MCF 10A (cell line): ENCODE measurements at regions of chr12 and their contacts with region 1.

Region 1: GRCh38 chr12:29769162-29769858 is 14.4 kb downstream of the TMTC1 start:
- DNase-seq: peak; percentile 91
- H3K4me3 Mint-ChIP-seq: no peak overlapping the region
- H3K27ac Mint-ChIP-seq: peak overlapping the region; percentile 63
- H3K4me1 Mint-ChIP-seq: peaks cover 45% of the 10 kb centered on the region
- H3K27me3 Mint-ChIP-seq: no peaks in the 10 kb centered on the region
- CTCF ChIP-seq: no peak

Region 2: GRCh38 chr12:29562167-29562776 is 207.0 kb before region 1 on chr12:
- CTCF ChIA-PET with region 1: no interaction called
- POLR2A ChIA-PET with region 1: no interaction called
- intact Hi-C with region 1: no loop called
- DNase-seq: peak; percentile 58
- H3K4me3 Mint-ChIP-seq: no peak overlapping the region
- H3K27ac Mint-ChIP-seq: no peak overlapping the region
- H3K4me1 Mint-ChIP-seq: peaks cover 7% of the 10 kb centered on the region
- H3K27me3 Mint-ChIP-seq: no peaks in the 10 kb centered on the region
- CTCF ChIP-seq: no peak

Region 3: DNA sequence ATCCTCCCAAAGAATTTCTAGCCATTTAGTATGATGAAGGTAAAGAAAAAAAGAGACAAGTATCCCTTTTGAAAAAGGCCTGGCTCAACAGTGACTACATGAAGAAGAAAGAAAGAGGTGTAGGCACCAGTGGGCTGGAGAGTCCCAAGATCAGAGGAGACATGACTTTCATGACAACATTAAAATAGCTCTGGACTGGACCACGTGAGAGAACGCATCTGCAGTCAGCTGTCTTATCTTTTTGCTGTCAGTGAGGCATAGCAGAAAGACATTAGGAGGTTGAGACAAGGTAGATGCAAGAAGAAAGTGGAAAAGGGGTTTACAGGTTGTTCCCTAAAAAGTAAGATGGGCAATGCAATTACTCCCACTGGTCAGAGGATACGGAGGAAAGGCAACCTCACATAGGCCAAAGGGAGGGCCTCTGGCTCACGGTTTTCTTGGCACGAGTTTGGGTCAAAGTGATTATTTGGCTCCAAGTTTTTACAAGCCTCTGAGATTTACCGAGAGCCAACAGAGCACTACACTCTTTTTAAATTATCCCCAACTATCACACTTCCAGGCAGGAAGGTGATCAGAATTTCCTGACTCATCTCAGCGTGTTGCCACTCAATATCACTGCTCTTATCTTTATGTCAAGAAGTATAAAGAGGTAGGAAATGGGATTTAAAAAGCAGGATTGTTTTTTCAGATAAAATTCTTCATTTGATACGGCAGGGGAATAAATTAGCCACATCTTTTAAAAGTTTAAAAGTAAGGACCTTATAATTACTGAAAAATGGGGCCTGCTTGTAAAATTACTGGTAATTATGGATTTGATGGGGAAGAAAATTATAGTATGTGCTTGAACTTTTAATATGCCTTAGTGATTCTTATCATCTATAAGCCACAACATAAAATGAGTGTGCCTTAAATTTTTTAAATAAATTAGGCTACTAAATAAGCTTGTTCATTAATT is 14.8 kb before region 1 on chr12:
- CTCF ChIA-PET with region 1: interaction called, 3 read pairs
- POLR2A ChIA-PET with region 1: interaction called, 10 read pairs
- intact Hi-C with region 1: no loop called
- DNase-seq: no peak
- H3K4me3 Mint-ChIP-seq: no peak overlapping the region
- H3K27ac Mint-ChIP-seq: peak overlapping the region; percentile 92
- H3K4me1 Mint-ChIP-seq: peaks cover 38% of the 10 kb centered on the region
- H3K27me3 Mint-ChIP-seq: no peaks in the 10 kb centered on the region
- CTCF ChIP-seq: no peak

Region 4: DNA sequence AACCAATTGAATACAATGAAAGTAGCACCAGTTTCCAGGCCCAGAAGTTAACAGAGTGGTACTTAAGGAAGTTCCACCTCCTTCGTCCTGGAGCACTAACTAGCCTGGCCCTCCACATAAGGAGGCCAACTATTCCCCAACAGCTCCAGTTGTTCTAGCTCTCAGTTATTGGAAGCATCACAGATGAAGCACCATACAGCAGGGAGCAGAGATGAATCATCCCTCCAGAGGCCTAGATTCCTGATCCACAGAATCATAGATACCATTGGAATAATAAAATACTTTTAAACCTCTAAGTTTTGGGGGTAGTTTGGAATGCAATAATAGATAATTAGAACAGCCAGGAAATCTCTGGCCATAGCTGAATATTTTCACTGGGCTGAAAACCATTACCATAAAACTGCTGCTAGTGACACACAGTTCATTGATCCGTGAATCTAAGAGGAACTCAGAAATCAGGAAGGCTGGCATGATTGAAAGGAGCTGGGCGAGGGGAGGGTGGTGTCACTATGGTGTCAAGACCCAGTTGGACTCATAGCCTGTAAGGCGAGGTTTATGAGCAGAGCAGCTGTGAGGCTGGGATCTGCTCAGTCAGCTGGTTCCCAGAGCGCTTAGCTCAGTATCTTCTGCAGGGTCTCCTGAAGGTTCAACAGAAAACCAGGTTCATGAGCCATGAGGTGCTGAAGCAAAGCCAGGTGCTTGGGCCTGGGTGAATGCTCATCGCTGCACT is 385.9 kb after region 1 on chr12:
- CTCF ChIA-PET with region 1: no interaction called
- POLR2A ChIA-PET with region 1: no interaction called
- intact Hi-C with region 1: no loop called
- DNase-seq: no peak
- H3K4me3 Mint-ChIP-seq: no peak overlapping the region
- H3K27ac Mint-ChIP-seq: no peak overlapping the region
- H3K4me1 Mint-ChIP-seq: no peaks in the 10 kb centered on the region
- H3K27me3 Mint-ChIP-seq: no peaks in the 10 kb centered on the region
- CTCF ChIP-seq: no peak